Posterior vena cava (tissue), 2 donors: ENCODE measurements at regions of chr11 and their contacts with region 1.

Region 1: DNA sequence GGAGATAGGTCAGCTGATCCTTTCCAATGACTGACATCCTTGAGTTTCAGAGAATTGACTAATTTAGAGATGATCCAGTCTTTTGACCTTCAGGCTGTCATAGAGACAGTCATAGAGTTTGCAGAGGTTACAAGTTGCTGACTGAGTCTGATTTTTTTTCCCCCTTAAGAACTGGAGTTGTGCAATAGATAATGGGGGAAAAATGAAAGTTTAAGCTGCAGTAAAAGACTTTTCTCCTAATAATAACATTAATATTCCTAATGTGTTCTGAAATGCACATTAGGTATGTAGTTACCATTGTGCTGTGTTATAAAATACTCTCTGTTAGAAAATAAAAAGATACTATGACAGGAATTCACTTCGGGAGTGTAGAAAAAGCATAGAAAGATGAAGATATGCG is 876.9 kb upstream of the RAG2 start:
- DNase-seq: no peak

Region 2: DNA sequence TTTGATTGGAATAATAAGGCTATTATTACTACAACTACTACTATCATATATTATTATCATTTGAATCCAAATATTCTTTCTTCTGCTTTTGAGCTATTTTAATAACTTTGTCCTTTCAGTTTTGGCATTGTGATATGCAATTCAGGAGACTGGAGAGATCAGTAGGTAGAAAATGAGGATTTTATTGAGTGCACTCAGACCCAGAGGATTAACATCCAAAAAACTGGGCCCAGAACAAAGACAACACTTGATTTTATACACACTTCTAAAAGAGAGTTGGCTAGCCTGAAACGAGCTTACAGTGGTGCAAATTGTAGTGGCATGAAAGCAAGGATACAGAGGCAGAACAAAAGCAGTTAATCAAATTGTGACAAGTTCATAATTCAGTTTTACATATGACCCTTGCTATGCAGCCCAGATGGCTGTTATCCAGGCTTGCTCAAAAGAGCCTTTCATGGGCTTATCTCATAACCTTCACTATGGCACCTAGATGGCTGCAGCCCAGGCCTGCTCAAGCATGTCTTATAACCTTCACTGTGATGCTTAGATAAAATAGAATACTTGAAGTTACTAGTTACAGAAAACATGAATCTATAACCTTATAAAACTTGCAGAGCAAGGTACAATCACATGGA is 80.5 kb before region 1 on chr11:
- intact Hi-C with region 1: no loop called
- DNase-seq: no peak

Region 3: GRCh38 chr11:37504060-37504611 is 29.2 kb after region 1 on chr11:
- intact Hi-C with region 1: loop called in 1 of 2 experiments (anchors 1 kb)
- DNase-seq: no peak

Region 4: GRCh38 chr11:37544491-37544890 is 69.6 kb after region 1 on chr11:
- intact Hi-C with region 1: no loop called
- DNase-seq: no peak